Endothelial cell of umbilical vein (primary cell): ENCODE measurements at regions of chr1 and their contacts with region 1.

Region 1: GRCh38 chr1:21919520-21919919 is 17.6 kb downstream of the HSPG2 start:
- DNase-seq: peak; percentile 78
- H3K4me3 ChIP-seq: no peak overlapping the region
- H3K27ac ChIP-seq: peak overlapping the region; percentile 1
- H3K4me1 ChIP-seq: peaks cover 92% of the 10 kb centered on the region
- H3K27me3 ChIP-seq: no peaks in the 10 kb centered on the region
- CTCF ChIP-seq: no peak
- POLR2A ChIP-seq: no peak

Region 2: GRCh38 chr1:21901473-21901847 is 18.1 kb before region 1 on chr1:
- CTCF ChIA-PET with region 1: interaction called, 4 read pairs
- POLR2A ChIA-PET with region 1: interaction called, 8 read pairs
- dilution Hi-C with region 1: no loop called
- intact Hi-C with region 1: loop called (anchors 1 kb)
- DNase-seq: peak; percentile 81
- H3K4me3 ChIP-seq: no peak overlapping the region
- H3K27ac ChIP-seq: peak overlapping the region; percentile 87
- H3K4me1 ChIP-seq: peaks cover 92% of the 10 kb centered on the region
- H3K27me3 ChIP-seq: no peaks in the 10 kb centered on the region
- CTCF ChIP-seq: peak; percentile 18 to 46
- POLR2A ChIP-seq: no peak

Region 3: DNA sequence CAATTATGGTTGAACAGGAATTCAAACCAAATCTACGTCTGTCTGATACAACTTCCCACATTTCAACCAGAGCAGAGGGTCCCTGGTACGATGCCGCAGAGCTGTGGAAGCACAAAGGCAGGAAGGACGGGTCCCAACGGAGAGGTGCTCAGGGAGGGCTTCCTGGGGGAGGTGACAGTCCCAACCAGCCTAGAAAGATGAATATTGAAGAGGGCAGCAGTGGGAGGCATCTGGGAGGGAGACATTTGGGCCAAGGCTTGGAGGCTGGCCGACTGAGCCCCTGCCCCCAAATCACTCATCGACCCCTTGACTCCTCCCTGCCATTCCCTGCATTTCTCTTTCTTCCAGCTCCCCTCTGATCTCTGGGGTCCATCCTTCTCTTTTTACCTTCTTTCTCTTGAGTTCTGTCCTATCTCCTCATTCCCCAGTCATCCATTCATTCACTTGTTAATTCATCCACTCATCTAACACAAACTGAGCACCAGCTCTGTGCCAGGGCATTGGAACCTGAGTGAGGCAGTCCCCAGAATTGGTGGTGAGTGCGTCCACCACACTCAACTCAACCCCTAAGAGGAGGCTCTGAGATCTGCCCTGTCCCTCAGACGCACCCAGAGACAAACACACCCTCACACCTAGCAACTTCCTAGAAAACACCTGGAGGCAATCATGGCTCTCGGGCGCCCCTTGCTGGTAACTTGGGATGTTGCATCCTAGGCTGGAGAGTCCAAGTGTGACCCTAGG is 44.1 kb after region 1 on chr1:
- CTCF ChIA-PET with region 1: interaction called, 16 read pairs
- POLR2A ChIA-PET with region 1: interaction called, 6 read pairs
- dilution Hi-C with region 1: no loop called
- intact Hi-C with region 1: loop called (anchors 1 kb)
- DNase-seq: peak; percentile 81
- H3K4me3 ChIP-seq: no peak overlapping the region
- H3K27ac ChIP-seq: peak overlapping the region; percentile 1
- H3K4me1 ChIP-seq: peaks cover 26% of the 10 kb centered on the region
- H3K27me3 ChIP-seq: no peaks in the 10 kb centered on the region
- CTCF ChIP-seq: peak; percentile 85 to 91
- POLR2A ChIP-seq: peak; percentile 29